ENCODE measurements at regions of chr13 and their contacts with region 1.

Region 1: GRCh38 chr13:31044377-31045285 is 112.2 kb downstream of the TEX26 start:
- DNase-seq: peak; percentile 71 to 78
- H3K4me3 ChIP-seq: no peak overlapping the region
- H3K27ac ChIP-seq: peak overlapping the region in 2 of 3 donors; percentile 74 to 86
- H3K4me1 ChIP-seq: peaks cover 19 to 25% of the 10 kb centered on the region in 2 donors
- H3K27me3 ChIP-seq: no peaks in the 10 kb centered on the region
- CTCF ChIP-seq: peak; percentile 81 to 95 (median 86)
- POLR2A ChIP-seq: no peak

Region 2: DNA sequence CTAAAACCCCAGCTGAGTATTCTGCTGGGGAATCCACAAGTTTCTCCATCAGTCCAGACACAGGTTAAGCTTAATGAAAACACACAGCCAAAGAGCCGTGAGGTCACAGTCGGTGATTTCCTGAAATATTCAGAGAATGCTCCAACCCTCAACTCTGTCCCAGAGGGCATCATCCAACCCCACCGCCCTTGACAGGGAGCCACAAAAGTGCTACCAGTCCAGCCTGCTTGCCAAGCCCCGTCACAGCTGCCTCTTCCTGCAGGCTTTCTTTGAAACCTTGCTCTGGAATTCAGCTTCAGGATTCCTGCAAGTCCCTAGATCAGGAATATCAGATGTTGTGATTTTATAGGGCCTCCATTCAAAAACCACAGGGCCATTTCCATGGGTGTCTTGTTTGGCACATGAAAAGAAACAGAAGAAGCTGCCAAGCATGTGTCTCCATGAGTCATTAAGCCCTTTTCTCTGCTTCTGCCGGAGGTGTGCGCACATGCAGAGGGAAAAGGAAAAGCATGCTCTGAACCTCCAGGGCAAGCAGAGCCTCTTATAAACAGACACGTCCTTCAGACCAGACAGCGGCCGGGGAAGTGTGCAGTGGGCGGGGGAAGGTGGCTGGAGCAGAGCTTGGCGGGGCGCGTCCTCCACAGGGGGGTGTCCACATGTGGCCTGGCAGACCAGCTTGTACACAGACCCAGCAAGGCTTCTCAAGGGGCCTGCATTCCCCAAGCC is 902.0 kb before region 1 on chr13:
- intact Hi-C with region 1: loop called (anchors 10 kb)
- DNase-seq: peak; percentile 78 to 89
- H3K4me3 ChIP-seq: no peak overlapping the region
- H3K27ac ChIP-seq: peak overlapping the region; percentile 9 to 64 (median 54)
- H3K4me1 ChIP-seq: peaks cover 17 to 27% of the 10 kb centered on the region in 2 donors
- H3K27me3 ChIP-seq: no peaks in the 10 kb centered on the region
- CTCF ChIP-seq: no peak
- POLR2A ChIP-seq: peak in 1 of 2 donors; percentile 6

Region 3: GRCh38 chr13:31174018-31174417 is 129.4 kb after region 1 on chr13:
- intact Hi-C with region 1: loop called (anchors 10 kb)
- DNase-seq: no peak
- H3K4me3 ChIP-seq: no peak overlapping the region
- H3K27ac ChIP-seq: no peak overlapping the region
- H3K4me1 ChIP-seq: peaks cover 0 to 6% of the 10 kb centered on the region in 2 donors
- H3K27me3 ChIP-seq: no peaks in the 10 kb centered on the region
- CTCF ChIP-seq: no peak
- POLR2A ChIP-seq: no peak

Measured in thyroid gland (tissue), 4 donors.